A673 (cell line): ENCODE measurements at regions of chr3 and their contacts with region 1.

Region 1: GRCh38 chr3:29280404-29281093 is at the start of gene RBMS3:
- DNase-seq: peak; percentile 97
- H3K4me3 ChIP-seq: peak within 1 kb of the TSS; percentile 59
- H3K27ac ChIP-seq: peak within 1 kb of the TSS; percentile 67
- H3K4me1 ChIP-seq: peaks cover 20% of the 10 kb centered on the region
- H3K27me3 ChIP-seq: no peaks in the 10 kb centered on the region
- CTCF ChIP-seq: peak; percentile 66
- total RNA-seq, gene RBMS3: 5.9 and 7.9 TPM in 2 replicates

Region 2: GRCh38 chr3:28916713-28917499 is 363.6 kb before region 1 on chr3:
- CTCF ChIA-PET with region 1: no interaction called
- POLR2A ChIA-PET with region 1: no interaction called
- intact Hi-C with region 1: loop called (anchors 5 kb)
- DNase-seq: peak; percentile 85
- H3K4me3 ChIP-seq: peak overlapping the region; percentile 35
- H3K27ac ChIP-seq: peak overlapping the region; percentile 25
- H3K4me1 ChIP-seq: peaks cover 12% of the 10 kb centered on the region
- H3K27me3 ChIP-seq: no peaks in the 10 kb centered on the region
- CTCF ChIP-seq: peak; percentile 72

Region 3: GRCh38 chr3:29064085-29064484 is 216.5 kb before region 1 on chr3:
- CTCF ChIA-PET with region 1: no interaction called
- POLR2A ChIA-PET with region 1: no interaction called
- intact Hi-C with region 1: no loop called
- DNase-seq: peak; percentile 78
- H3K4me3 ChIP-seq: no peak overlapping the region
- H3K27ac ChIP-seq: peak overlapping the region; percentile 13
- H3K4me1 ChIP-seq: peaks cover 24% of the 10 kb centered on the region
- H3K27me3 ChIP-seq: no peaks in the 10 kb centered on the region
- CTCF ChIP-seq: no peak

Region 4: DNA sequence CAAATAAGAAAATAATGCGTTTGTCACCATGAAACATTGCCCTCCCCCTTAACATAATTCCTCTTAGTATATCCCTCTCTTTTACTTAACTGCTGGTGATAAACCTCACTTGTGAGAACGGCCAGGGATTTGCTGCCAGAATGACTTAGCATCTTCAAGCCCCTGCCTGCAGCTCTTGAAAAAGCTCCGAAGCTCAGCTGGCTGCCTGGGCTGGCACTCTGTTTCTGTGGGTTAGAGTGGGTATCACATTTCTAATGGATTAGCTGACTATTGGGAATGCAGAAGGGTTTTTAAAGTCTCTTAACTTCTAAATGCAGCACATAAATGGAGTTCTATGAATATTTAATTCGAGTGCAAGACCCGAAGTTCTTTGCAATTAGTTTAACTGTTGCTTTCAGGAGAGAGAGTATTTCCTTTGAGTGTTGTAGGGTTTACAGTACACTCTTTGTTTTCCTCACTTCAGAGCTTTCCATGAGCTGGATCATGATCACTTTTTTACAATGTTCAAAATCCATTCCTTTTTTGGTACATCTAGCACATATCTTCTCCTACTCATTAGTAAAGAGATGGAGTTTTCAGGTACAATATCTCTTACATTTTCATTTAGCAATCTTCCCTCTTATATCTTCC is 124.3 kb before region 1 on chr3:
- CTCF ChIA-PET with region 1: no interaction called
- POLR2A ChIA-PET with region 1: no interaction called
- intact Hi-C with region 1: no loop called
- DNase-seq: peak; percentile 87
- H3K4me3 ChIP-seq: no peak overlapping the region
- H3K27ac ChIP-seq: no peak overlapping the region
- H3K4me1 ChIP-seq: peaks cover 19% of the 10 kb centered on the region
- H3K27me3 ChIP-seq: no peaks in the 10 kb centered on the region
- CTCF ChIP-seq: no peak

Region 5: DNA sequence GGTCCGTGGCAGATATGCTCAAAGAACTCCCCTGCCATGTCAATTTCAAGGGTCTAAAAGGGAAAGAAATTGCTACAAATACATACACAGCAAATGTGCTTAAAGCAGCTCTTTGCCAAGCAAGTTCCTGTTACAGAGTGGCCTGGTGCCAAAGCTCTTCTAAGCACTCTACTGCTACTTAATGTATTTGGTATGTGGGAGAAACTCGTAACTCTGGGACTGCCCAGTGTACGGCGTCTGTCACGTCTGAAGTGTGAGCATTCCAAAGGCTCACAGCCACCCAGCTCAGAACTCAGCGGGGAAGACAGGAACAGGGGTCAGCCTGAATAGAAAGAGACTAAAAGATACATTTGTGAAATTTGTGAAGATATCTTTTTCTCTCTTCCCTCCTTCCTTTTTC is 54.9 kb after region 1 on chr3:
- CTCF ChIA-PET with region 1: interaction called, 4 read pairs
- POLR2A ChIA-PET with region 1: no interaction called
- intact Hi-C with region 1: loop called (anchors 5 kb)
- DNase-seq: peak; percentile 99
- H3K4me3 ChIP-seq: peak overlapping the region; percentile 30
- H3K27ac ChIP-seq: peak overlapping the region; percentile 72
- H3K4me1 ChIP-seq: peaks cover 67% of the 10 kb centered on the region
- H3K27me3 ChIP-seq: no peaks in the 10 kb centered on the region
- CTCF ChIP-seq: no peak

Region 6: DNA sequence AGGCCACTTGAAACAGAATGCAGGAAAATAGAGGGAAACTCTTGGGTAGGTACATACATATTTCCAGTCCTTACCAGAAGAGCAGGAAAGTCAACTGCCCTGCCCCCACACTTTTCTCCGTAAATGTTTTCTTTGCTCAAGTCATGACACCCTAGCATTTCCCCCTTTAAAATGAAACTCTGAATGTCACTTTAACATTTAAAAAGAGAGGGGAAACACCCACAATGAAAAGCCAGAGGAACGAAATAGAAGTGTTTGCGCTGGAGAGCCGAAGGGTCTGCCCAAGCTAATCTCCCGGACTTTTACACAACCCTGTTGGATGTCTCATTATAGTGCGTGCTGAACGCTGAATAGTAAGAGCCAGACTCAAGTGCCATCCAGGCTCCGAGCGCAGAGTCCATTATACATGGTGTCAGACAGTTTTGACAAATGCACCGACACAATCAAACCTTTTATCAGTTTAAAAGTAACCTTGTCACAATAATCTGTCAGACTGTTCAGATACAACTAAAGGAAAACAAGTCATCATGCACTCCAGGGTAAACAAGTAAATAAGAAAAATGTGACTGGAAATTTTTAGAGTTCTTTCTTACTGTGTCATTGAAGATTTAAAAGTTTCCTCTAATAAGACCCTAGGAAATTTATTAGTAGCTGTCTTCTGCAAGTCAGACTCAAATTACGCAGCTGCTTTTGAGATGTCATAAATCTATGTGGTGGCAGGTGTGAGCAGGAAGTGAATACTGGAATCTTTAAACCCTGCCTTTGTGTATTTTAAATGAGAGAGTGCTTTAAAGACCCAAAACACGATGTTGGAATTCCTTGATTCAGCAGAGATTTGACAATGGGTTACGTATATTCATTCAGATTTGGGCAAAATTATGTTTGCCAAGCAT is 160.1 kb after region 1 on chr3:
- CTCF ChIA-PET with region 1: no interaction called
- POLR2A ChIA-PET with region 1: no interaction called
- intact Hi-C with region 1: loop called (anchors 5 kb)
- DNase-seq: peak; percentile 87
- H3K4me3 ChIP-seq: peak overlapping the region; percentile 39
- H3K27ac ChIP-seq: peak overlapping the region; percentile 60
- H3K4me1 ChIP-seq: peaks cover 21% of the 10 kb centered on the region
- H3K27me3 ChIP-seq: no peaks in the 10 kb centered on the region
- CTCF ChIP-seq: no peak

Region 7: DNA sequence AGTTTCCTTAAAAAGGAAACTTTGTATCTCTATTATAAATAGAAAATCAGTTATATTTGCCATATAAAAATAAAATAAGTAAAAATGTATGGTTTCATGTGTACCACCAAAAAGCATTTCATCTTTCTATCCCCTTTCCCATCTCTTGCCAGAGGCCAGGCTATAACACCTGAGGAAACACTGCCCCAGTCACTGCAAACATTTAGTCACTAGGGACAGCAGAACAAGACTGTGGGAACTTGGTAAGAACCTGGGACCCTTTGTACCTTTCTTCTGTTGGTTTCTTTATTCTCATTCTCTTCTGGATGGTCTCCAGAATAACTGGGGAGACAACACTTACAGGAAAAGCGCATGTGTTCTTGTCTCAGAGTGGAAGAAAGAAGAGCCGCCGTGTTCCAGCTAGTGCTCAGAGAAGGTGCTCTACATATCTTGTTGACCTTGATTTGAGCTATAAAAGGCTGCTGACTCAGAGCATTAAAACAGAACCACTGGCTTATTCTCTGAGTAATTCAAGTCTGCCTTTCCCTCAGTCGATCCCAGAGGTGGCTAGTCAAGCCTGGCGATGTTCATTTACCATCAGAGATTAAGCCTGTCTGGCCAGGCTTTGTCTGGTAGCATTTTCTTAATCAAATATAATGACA is 362.0 kb after region 1 on chr3:
- CTCF ChIA-PET with region 1: no interaction called
- POLR2A ChIA-PET with region 1: no interaction called
- intact Hi-C with region 1: loop called (anchors 5 kb)
- DNase-seq: no peak
- H3K4me3 ChIP-seq: no peak overlapping the region
- H3K27ac ChIP-seq: no peak overlapping the region
- H3K4me1 ChIP-seq: peaks cover 37% of the 10 kb centered on the region
- H3K27me3 ChIP-seq: peaks cover 20% of the 10 kb centered on the region
- CTCF ChIP-seq: no peak

Region 8: GRCh38 chr3:29759411-29760225 is 479.1 kb after region 1 on chr3:
- CTCF ChIA-PET with region 1: interaction called, 4 read pairs
- POLR2A ChIA-PET with region 1: no interaction called
- intact Hi-C with region 1: loop called (anchors 2 kb)
- DNase-seq: peak; percentile 78
- H3K4me3 ChIP-seq: peak overlapping the region; percentile 23
- H3K27ac ChIP-seq: peak overlapping the region; percentile 77
- H3K4me1 ChIP-seq: peaks cover 67% of the 10 kb centered on the region
- H3K27me3 ChIP-seq: no peaks in the 10 kb centered on the region
- CTCF ChIP-seq: no peak

Region 9: GRCh38 chr3:29936054-29936453 is 655.5 kb after region 1 on chr3:
- CTCF ChIA-PET with region 1: no interaction called
- POLR2A ChIA-PET with region 1: no interaction called
- intact Hi-C with region 1: no loop called
- DNase-seq: no peak
- H3K4me3 ChIP-seq: no peak overlapping the region
- H3K27ac ChIP-seq: no peak overlapping the region
- H3K4me1 ChIP-seq: peaks cover 11% of the 10 kb centered on the region
- H3K27me3 ChIP-seq: no peaks in the 10 kb centered on the region
- CTCF ChIP-seq: no peak

Region 10: GRCh38 chr3:30984855-30985749 is 1704.6 kb after region 1 on chr3:
- CTCF ChIA-PET with region 1: no interaction called
- POLR2A ChIA-PET with region 1: no interaction called
- intact Hi-C with region 1: no loop called
- DNase-seq: peak; percentile 32
- H3K4me3 ChIP-seq: no peak overlapping the region
- H3K27ac ChIP-seq: no peak overlapping the region
- H3K4me1 ChIP-seq: peaks cover 7% of the 10 kb centered on the region
- H3K27me3 ChIP-seq: no peaks in the 10 kb centered on the region
- CTCF ChIP-seq: no peak